ACHN (cell line): ENCODE measurements at regions of chr10 and their contacts with region 1.

Region 1: GRCh38 chr10:93859049-93859655 is 34.6 kb upstream of the SLC35G1 start:
- DNase-seq: peak; percentile 14

Region 2: DNA sequence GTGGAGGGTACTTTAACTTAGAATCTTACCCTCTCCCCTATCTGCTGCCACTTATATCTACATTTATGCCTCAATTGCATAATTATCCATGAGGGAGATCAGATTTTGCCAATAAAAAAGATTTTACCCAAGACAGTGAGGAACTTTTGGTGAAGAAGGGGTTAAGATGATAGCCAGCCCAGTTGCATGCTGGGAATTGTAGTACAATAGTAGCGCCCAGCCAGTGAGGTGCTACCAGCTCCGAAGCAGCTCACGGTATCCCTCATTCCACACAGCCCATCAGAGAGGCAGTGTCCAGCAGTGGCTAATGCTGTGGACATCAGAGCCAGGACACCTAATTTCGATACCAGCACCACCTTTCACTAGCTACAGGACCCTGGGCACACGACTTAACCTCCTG is 107.3 kb before region 1 on chr10:
- in situ Hi-C with region 1: loop called (anchors 25 kb)
- DNase-seq: peak; percentile 25